Dendritic cell treated with granulocyte-macrophage colony-stimulating factor and Interleukin-4, amounts not matched to agents 40 ng/mL and 50 ng/mL, for 4 days (primary cell): ENCODE measurements at regions of chr1 and their contacts with region 1.

Region 1: GRCh38 chr1:162023547-162024501 is at the start of gene OLFML2B:
- H3K4me3 Mint-ChIP-seq: peak within 1 kb of the TSS; percentile 94
- H3K27ac Mint-ChIP-seq: peak within 1 kb of the TSS; percentile 95
- H3K4me1 Mint-ChIP-seq: peaks cover 63% of the 10 kb centered on the region
- H3K27me3 Mint-ChIP-seq: peaks cover 35% of the 10 kb centered on the region

Region 2: GRCh38 chr1:161954050-161954449 is 69.8 kb before region 1 on chr1:
- intact Hi-C with region 1: loop called (anchors 5 kb)
- H3K4me3 Mint-ChIP-seq: no peak overlapping the region
- H3K27ac Mint-ChIP-seq: peak overlapping the region; percentile 91
- H3K4me1 Mint-ChIP-seq: peaks cover 53% of the 10 kb centered on the region
- H3K27me3 Mint-ChIP-seq: no peaks in the 10 kb centered on the region

Region 3: GRCh38 chr1:161989108-161989507 is 34.7 kb before region 1 on chr1:
- intact Hi-C with region 1: no loop called
- H3K4me3 Mint-ChIP-seq: no peak overlapping the region
- H3K27ac Mint-ChIP-seq: peak overlapping the region; percentile 70
- H3K4me1 Mint-ChIP-seq: peaks cover 33% of the 10 kb centered on the region
- H3K27me3 Mint-ChIP-seq: no peaks in the 10 kb centered on the region

Region 4: DNA sequence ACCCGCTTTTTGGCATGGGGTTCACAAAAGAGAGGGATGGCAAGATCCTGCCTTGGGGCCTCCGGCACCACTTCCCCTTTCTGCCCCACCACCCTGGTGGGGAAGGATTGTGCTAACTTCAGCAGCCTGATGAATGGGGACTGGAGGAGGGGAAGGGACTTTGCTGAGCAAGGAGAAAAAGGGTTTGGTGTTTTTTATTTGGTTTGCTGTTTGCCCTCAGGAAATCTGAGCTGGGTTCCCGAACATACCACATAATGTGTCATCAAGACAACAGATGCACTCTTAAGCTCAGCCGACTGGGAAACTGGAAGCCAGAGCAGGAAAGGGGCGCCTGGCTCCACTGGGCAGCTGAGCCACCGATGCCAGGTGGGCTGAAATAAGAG is 20.0 kb before region 1 on chr1:
- intact Hi-C with region 1: loop called (anchors 1 kb)
- H3K4me3 Mint-ChIP-seq: peak overlapping the region; percentile 85
- H3K27ac Mint-ChIP-seq: peak overlapping the region; percentile 98
- H3K4me1 Mint-ChIP-seq: peaks cover 41% of the 10 kb centered on the region
- H3K27me3 Mint-ChIP-seq: no peaks in the 10 kb centered on the region